G401 (cell line): ENCODE measurements at regions of chr14 and their contacts with region 1.

Region 1: GRCh38 chr14:75709207-75709812 is 48.3 kb downstream of the TTLL5 start:
- DNase-seq: peak; percentile 78

Region 2: GRCh38 chr14:75773046-75773445 is 63.7 kb after region 1 on chr14:
- in situ Hi-C with region 1: no loop called
- DNase-seq: no peak

Region 3: DNA sequence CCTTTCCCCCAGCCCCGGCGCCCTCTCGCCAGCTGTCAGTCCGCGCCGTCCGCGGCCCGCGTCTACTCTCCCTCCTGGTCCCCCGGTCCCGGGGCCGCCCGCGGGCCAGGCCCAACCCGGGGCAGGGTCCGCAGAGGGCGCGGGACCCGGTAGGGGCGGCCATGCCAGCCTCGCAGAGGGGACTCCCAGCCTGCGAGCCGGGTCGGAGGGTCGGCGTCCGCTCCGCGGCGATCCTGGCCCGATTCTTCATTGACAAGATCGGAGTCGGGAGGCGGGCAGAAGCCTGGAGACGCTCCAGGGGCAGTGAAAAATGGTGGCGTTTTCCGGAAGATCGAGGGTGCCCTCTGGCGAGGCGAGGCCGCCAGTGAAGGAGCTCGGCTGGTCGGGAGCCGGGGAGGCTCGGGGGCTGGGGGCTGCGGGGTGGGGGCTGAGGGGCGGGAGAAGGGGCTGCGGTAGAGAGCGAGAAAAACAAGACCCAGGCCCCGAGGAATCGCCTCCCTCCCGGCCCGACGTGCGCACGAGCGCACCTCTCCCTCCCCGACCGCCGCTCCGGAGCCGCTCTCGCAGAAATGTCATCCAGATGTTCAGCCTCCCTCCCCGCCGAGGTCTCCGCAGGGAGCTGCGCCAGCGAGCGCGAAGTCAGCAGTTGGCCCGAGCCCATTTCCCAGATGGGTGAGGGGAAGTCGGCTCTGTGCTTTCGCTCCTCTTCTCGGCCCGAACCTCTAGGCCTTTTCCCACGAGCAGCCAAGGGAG is 273.1 kb after region 1 on chr14:
- in situ Hi-C with region 1: loop called (anchors 25 kb)
- DNase-seq: peak; percentile 70